IMR-90 (cell line): ENCODE measurements at regions of chr3 and their contacts with region 1.

Region 1: DNA sequence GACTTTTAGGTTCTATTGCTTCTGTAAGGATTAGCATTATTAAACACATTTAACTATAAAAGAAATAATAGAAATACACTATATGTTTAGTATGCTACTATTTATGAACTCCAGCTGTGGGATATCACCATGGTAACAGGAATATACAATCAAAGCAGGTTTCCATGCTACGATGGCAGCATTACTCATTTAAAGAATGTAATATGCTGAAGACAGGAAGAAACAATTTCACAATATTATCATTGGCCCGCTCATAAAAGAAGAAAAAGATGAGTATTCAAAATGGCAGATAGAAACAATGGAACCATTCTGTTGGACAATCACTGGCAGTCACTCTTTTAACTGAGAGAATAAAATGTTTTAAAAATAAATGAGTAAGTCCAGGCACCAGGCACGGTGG is 153.4 kb downstream of the CBLB start:
- DNase-seq: peak; percentile 90
- ATAC-seq: peak; percentile 46
- H3K4me3 ChIP-seq: no peak overlapping the region
- H3K27ac ChIP-seq: no peak overlapping the region
- H3K4me1 ChIP-seq: no peaks in the 10 kb centered on the region
- H3K27me3 ChIP-seq: no peaks in the 10 kb centered on the region
- CTCF ChIP-seq: no peak
- POLR2A ChIP-seq: no peak
- RAD21 ChIP-seq: no peak

Region 2: GRCh38 chr3:105656651-105657504 is 58.5 kb before region 1 on chr3:
- CTCF ChIA-PET with region 1: no interaction called
- POLR2A ChIA-PET with region 1: no interaction called
- dilution Hi-C with region 1: no loop called
- in situ Hi-C with region 1: no loop called
- intact Hi-C with region 1: no loop called
- DNase-seq: no peak
- ATAC-seq: no peak
- H3K4me3 ChIP-seq: no peak overlapping the region
- H3K27ac ChIP-seq: no peak overlapping the region
- H3K4me1 ChIP-seq: no peaks in the 10 kb centered on the region; the same call in 1 of the 2 replicates
- H3K27me3 ChIP-seq: no peaks in the 10 kb centered on the region
- CTCF ChIP-seq: no peak
- POLR2A ChIP-seq: no peak
- RAD21 ChIP-seq: no peak

Region 3: DNA sequence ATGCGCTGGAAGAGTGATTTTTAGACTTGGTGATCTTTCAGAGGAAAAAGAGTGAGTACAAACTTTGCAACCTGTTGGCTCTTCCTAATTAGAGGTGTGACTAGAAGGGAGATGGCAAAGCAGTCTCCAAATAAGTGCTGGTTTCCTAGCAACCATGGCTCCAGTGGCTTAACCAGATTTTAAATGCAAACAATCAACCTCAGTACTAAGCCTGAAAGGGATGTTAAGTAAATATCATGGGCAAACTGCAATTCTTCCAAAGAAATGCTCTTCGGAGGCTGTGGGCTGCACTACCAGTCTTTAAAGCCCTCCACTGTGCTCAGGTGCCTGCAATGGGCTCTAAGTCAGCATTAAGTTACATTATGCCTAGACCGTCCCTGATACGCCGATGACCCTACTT is 983.8 kb after region 1 on chr3:
- CTCF ChIA-PET with region 1: interaction called, 10 read pairs
- POLR2A ChIA-PET with region 1: no interaction called
- dilution Hi-C with region 1: no loop called
- in situ Hi-C with region 1: no loop called
- intact Hi-C with region 1: no loop called
- DNase-seq: no peak
- ATAC-seq: no peak
- H3K4me3 ChIP-seq: no peak overlapping the region
- H3K27ac ChIP-seq: no peak overlapping the region
- H3K4me1 ChIP-seq: no peaks in the 10 kb centered on the region
- H3K27me3 ChIP-seq: no peaks in the 10 kb centered on the region
- CTCF ChIP-seq: no peak
- POLR2A ChIP-seq: no peak
- RAD21 ChIP-seq: no peak